ENCODE measurements at regions of chr2 and their contacts with region 1.

Region 1: GRCh38 chr2:219218732-219219701 is at the start of gene ABCB6:
- DNase-seq: peak; percentile 96
- H3K4me3 Mint-ChIP-seq: peak within 1 kb of the TSS; percentile 91
- H3K27ac Mint-ChIP-seq: peak within 1 kb of the TSS; percentile 81
- H3K4me1 Mint-ChIP-seq: peaks cover 24% of the 10 kb centered on the region
- H3K27me3 Mint-ChIP-seq: no peaks in the 10 kb centered on the region
- total RNA-seq, gene ABCB6: 28.8 TPM in 2 replicates

Region 2: GRCh38 chr2:219206442-219207253 is 12.4 kb before region 1 on chr2 and contains the start of gene ZFAND2B:
- intact Hi-C with region 1: loop called (anchors 1 kb)
- DNase-seq: peak; percentile 99
- H3K4me3 Mint-ChIP-seq: peak within 1 kb of the TSS; percentile 83
- H3K27ac Mint-ChIP-seq: peak within 1 kb of the TSS; percentile 92
- H3K4me1 Mint-ChIP-seq: peaks cover 35% of the 10 kb centered on the region
- H3K27me3 Mint-ChIP-seq: no peaks in the 10 kb centered on the region
- total RNA-seq, gene ZFAND2B: 36.7 and 37.4 TPM in 2 replicates

Region 3: GRCh38 chr2:219229305-219230058 is 10.5 kb after region 1 on chr2 and contains the starts of genes ANKZF1 and ATG9A:
- intact Hi-C with region 1: loop called (anchors 1 kb)
- DNase-seq: peak; percentile 100
- H3K4me3 Mint-ChIP-seq: peak within 1 kb of the TSS; percentile 92
- H3K27ac Mint-ChIP-seq: peak within 1 kb of the TSS; percentile 98
- H3K4me1 Mint-ChIP-seq: peaks cover 43% of the 10 kb centered on the region
- H3K27me3 Mint-ChIP-seq: no peaks in the 10 kb centered on the region
- total RNA-seq, gene ANKZF1: 144 and 149 TPM in 2 replicates
- total RNA-seq, gene ATG9A: 61.6 and 67.2 TPM in 2 replicates

Region 4: DNA sequence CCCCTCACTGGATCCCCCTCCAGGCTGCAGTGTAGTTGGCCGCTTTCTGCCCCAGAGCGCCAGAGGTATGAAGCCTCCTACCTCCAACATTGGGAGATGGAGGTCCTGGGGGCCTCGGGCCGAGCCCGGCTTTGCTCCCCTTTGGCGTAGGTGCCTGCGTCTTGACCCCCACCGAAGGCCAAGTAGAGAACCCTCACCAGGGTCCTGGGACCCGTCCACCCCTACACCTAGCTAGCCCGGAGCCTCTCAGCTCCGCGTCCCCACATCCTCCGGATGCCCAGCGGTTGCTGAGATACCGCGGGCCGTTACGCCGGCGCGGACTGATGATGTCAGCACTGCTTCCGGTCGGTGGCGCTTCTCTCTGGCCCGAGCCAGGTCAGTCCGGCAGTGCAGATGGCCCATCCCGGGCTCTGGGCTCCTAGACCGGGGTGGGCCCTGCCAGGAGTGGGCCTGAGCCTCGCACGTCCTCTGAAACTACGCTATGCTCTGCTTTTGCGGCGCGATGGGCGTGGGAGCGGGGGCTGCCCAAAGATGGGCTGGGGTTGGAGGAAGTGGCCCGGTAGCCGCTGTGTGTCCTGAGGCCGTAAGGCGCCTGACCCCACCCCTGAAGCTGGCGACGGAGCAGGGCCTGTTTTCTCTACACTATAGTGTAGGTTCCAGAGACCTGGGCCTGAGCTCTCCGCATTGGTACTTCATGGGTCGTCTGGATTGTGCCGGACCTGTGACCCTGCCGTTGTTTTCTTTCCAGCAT is 26.3 kb after region 1 on chr2 and contains the starts of genes GLB1L and STK16:
- intact Hi-C with region 1: loop called (anchors 1 kb)
- DNase-seq: peak; percentile 98
- H3K4me3 Mint-ChIP-seq: peak within 1 kb of the TSS; percentile 80
- H3K27ac Mint-ChIP-seq: peak within 1 kb of the TSS; percentile 99
- H3K4me1 Mint-ChIP-seq: peaks cover 58% of the 10 kb centered on the region
- H3K27me3 Mint-ChIP-seq: no peaks in the 10 kb centered on the region
- total RNA-seq, gene GLB1L: 4.6 and 4.9 TPM in 2 replicates
- total RNA-seq, gene STK16: 29.1 and 31.7 TPM in 2 replicates

Region 5: GRCh38 chr2:219294356-219295351 is 75.6 kb after region 1 on chr2:
- intact Hi-C with region 1: loop called (anchors 2 kb)
- DNase-seq: peak; percentile 97
- H3K4me3 Mint-ChIP-seq: peak overlapping the region; percentile 84
- H3K27ac Mint-ChIP-seq: peak overlapping the region; percentile 97
- H3K4me1 Mint-ChIP-seq: peaks cover 17% of the 10 kb centered on the region
- H3K27me3 Mint-ChIP-seq: peaks cover 6% of the 10 kb centered on the region